A549 (cell line): ENCODE measurements at regions of chr5 and their contacts with region 1.

Region 1: GRCh38 chr5:118987988-118988865 is at the start of gene DTWD2:
- DNase-seq: peak; percentile 94 to 95
- ATAC-seq: peak; percentile 99
- H3K4me3 ChIP-seq: peak within 1 kb of the TSS; percentile 54
- H3K27ac ChIP-seq: peak within 1 kb of the TSS; percentile 94 to 98
- H3K4me1 ChIP-seq: peaks cover 16% of the 10 kb centered on the region; the same call in 2 of the 3 replicates
- CTCF ChIP-seq: peak; percentile 98
- EP300 ChIP-seq: no peak
- POLR2A ChIP-seq: peak; percentile 84
- RAD21 ChIP-seq: peak; percentile 78 to 95
- polyA plus RNA-seq, gene DTWD2: 4.1 and 4.8 TPM in 2 replicates

Region 2: GRCh38 chr5:118968925-118969375 is 19.3 kb before region 1 on chr5:
- CTCF ChIA-PET with region 1: interaction called, 17 read pairs
- POLR2A ChIA-PET with region 1: no interaction called
- DNase-seq: no peak
- ATAC-seq: no peak
- H3K4me3 ChIP-seq: no peak overlapping the region
- H3K27ac ChIP-seq: no peak overlapping the region
- H3K4me1 ChIP-seq: no peaks in the 10 kb centered on the region
- CTCF ChIP-seq: no peak
- EP300 ChIP-seq: no peak
- POLR2A ChIP-seq: no peak
- RAD21 ChIP-seq: no peak

Region 3: GRCh38 chr5:119016125-119016774 is 28.0 kb after region 1 on chr5:
- CTCF ChIA-PET with region 1: interaction called, 27 read pairs
- POLR2A ChIA-PET with region 1: no interaction called
- DNase-seq: no peak
- ATAC-seq: no peak
- H3K4me3 ChIP-seq: no peak overlapping the region
- H3K27ac ChIP-seq: no peak overlapping the region
- H3K4me1 ChIP-seq: peaks cover 14% of the 10 kb centered on the region
- CTCF ChIP-seq: no peak
- EP300 ChIP-seq: no peak
- POLR2A ChIP-seq: no peak
- RAD21 ChIP-seq: no peak

Region 4: GRCh38 chr5:119070828-119071572 is 82.8 kb after region 1 on chr5 and contains the start of gene DMXL1:
- CTCF ChIA-PET with region 1: interaction called, 3 read pairs
- POLR2A ChIA-PET with region 1: interaction called, 20 read pairs
- DNase-seq: peak; percentile 81 to 99
- ATAC-seq: peak; percentile 91 to 95
- H3K4me3 ChIP-seq: peak within 1 kb of the TSS; percentile 74
- H3K27ac ChIP-seq: peak within 1 kb of the TSS; percentile 83 to 92
- H3K4me1 ChIP-seq: peaks cover 19% of the 10 kb centered on the region
- CTCF ChIP-seq: no peak
- EP300 ChIP-seq: no peak
- POLR2A ChIP-seq: peak; percentile 57
- RAD21 ChIP-seq: no peak
- polyA plus RNA-seq, gene DMXL1: 23.6 and 28.8 TPM in 2 replicates

Region 5: DNA sequence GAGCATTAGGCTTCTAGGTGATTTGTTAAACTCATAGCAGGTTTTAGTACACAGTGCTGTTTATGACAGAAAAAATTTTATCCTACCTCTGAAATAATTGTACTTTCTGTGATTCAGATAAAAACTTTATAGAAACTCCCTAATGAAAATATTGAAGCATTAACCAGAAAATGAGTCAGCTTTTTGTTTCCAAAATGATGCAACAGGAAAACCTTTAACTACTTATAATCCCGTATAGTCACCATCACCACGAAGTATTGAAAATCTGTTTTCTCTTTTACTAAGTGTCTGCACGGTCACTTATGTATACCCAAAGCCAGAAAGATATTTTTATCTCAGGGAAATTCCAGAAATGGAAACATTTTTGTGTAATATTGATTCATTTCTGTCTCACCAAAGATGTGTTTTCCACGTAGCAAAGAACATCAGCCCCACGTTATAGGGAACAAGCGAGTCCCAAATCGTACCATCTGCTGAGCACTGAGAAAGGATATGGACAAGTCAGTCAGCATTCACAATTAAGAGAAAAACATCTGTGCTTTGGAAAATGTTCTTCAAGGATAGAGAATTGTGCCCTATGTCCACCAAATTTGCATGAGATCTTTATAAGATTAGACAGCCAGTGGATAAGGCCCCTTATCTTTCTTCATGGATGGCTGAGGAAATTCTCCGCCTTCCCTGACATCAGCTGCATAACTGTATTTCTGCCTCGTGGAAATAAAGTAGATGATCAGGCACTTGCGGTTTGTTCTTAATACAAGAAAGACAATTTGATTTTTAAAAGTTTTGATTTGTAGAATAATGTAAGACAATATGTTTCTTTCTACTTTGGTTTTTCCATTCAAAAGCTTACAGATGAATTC is 409.5 kb after region 1 on chr5:
- CTCF ChIA-PET with region 1: interaction called, 24 read pairs
- POLR2A ChIA-PET with region 1: no interaction called
- DNase-seq: peak in 1 of 2 experiments; percentile 8
- ATAC-seq: no peak; a peak in 1 of 6 replicates
- H3K4me3 ChIP-seq: no peak overlapping the region; the same call in 2 of the 3 replicates
- H3K27ac ChIP-seq: peak overlapping the region; percentile 54 to 74
- H3K4me1 ChIP-seq: peaks cover 38% of the 10 kb centered on the region
- CTCF ChIP-seq: no peak
- EP300 ChIP-seq: no peak
- POLR2A ChIP-seq: no peak
- RAD21 ChIP-seq: no peak

Region 6: DNA sequence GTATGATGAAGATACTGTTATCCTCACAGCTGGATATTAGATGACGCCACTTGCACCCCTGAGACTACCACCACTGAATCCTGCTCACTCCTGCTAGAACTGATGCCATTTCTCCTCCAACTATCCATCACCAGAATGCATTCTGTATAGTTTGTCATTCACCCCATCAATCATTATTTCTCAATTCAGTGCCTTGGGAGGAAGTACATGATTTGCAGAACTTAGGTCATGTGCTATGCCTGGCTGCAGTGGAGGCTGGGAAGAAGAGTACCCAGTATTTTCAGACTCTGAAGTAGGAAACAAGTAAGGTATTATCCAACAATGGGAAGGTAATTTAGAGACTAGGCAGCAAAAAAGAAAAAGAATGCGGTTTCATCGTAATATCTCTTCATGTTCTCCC is 437.8 kb after region 1 on chr5:
- CTCF ChIA-PET with region 1: interaction called, 13 read pairs
- POLR2A ChIA-PET with region 1: no interaction called
- DNase-seq: no peak
- ATAC-seq: no peak
- H3K4me3 ChIP-seq: no peak overlapping the region
- H3K27ac ChIP-seq: no peak overlapping the region
- H3K4me1 ChIP-seq: no peaks in the 10 kb centered on the region
- CTCF ChIP-seq: no peak
- EP300 ChIP-seq: no peak
- POLR2A ChIP-seq: no peak
- RAD21 ChIP-seq: no peak